ENCODE measurements at regions of chr12 and their contacts with region 1.

Region 1: DNA sequence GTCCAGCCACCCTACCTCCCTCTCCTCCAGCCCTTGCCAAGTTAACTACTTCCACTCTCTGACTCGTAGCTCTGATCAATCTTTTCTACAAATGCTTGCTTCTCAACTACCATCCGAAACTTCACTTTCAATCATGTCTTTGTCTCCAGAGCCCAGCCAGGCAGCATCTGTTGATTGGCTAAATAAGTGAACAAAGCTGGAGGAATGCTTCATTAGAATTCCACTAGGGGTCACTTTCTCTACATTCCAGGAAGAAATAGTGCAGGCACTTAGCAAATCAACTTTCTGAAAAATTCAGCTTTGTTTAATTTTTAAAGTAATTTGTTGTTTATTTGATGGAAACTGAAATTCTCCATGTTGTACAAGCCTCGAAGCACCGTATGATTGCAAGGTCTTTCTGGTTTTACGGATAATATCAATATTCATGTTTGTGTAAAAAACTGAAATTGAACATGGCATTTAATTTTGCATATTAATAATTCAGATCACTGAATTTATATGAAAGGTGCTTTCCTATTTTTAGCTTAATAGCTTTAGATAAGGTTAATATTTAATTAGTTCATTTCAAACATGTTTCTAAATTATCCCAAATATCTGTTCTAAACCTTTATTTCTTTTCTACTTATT is 32.4 kb upstream of the HELB start:
- DNase-seq: peak; percentile 29 to 60
- H3K4me3 ChIP-seq: no peak overlapping the region
- H3K4me1 ChIP-seq: no peaks in the 10 kb centered on the region
- H3K27me3 ChIP-seq: no peaks in the 10 kb centered on the region

Region 2: DNA sequence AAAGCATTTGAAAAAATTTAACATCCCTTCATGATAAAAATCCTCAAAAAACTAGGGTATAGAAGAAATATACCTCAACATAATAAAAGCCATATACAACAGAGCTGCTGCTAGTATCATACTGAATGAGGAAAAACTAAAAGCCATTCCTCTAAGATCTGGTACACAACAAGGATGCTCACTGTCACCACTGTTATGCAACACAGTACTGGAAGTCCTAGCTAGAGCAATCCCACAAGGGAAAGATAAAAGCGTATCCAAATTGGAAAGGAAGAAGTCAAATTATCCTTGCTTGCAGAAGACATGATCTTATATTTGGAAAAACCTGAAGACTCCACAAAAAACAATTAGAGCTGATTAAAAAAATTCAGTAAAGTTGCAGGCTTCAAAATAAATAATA is 147.3 kb after region 1 on chr12:
- in situ Hi-C with region 1: loop called (anchors 10 kb)
- DNase-seq: no peak
- H3K4me3 ChIP-seq: no peak overlapping the region
- H3K4me1 ChIP-seq: no peaks in the 10 kb centered on the region
- H3K27me3 ChIP-seq: peaks cover 5% of the 10 kb centered on the region; the same call in 1 of the 2 replicates